PC-3 (cell line): ENCODE measurements at regions of chrX and their contacts with region 1.

Region 1: GRCh38 chrX:43750248-43750676 is 94.2 kb downstream of the MAOA start:
- DNase-seq: peak; percentile 71
- ATAC-seq: peak; percentile 74
- H3K4me3 ChIP-seq: no peak overlapping the region
- H3K27ac ChIP-seq: no peak overlapping the region
- H3K4me1 ChIP-seq: no peaks in the 10 kb centered on the region
- H3K27me3 ChIP-seq: no peaks in the 10 kb centered on the region
- CTCF ChIP-seq: peak; percentile 75

Region 2: GRCh38 chrX:43349363-43349762 is 400.9 kb before region 1 on chrX:
- CTCF ChIA-PET with region 1: no interaction called
- POLR2A ChIA-PET with region 1: no interaction called
- intact Hi-C with region 1: loop called (anchors 10 kb)
- DNase-seq: peak; percentile 55
- ATAC-seq: no peak
- H3K4me3 ChIP-seq: no peak overlapping the region
- H3K27ac ChIP-seq: no peak overlapping the region
- H3K4me1 ChIP-seq: no peaks in the 10 kb centered on the region
- H3K27me3 ChIP-seq: no peaks in the 10 kb centered on the region
- CTCF ChIP-seq: peak; percentile 70

Region 3: DNA sequence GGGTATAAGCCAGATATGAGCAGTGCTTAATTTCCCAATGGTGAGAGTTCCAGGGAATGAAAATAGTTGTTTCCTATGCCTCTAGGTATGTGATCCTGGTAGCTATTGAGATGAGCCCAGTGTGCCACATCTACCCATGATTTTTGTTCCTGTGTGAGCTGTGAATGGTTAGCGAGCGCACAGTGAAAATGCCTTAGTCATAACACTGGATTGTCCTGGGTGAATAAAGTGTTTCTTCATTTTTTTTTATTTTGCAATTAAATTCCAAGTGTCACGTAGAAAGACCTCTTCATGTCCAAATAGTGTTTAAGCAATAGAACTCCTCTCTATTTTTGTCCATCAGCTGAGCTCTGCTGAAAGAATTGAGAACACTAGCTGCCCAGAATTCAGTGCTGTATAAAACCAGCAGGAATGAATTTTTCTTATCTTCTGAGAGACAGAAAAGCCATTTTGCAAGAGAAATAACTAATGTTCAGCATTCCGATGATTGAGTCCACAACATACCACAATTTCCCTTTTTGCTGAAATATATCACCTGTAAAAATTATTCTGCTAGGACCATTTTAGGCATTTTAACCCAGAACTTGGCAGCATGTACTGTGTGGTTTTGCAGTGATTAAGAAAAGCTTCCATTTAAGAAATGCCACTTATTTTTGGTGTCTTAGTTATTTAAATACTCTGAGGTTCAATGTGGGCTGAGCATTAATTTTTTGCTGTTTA is 88.6 kb before region 1 on chrX:
- CTCF ChIA-PET with region 1: no interaction called
- POLR2A ChIA-PET with region 1: no interaction called
- intact Hi-C with region 1: no loop called
- DNase-seq: no peak
- ATAC-seq: no peak
- H3K4me3 ChIP-seq: no peak overlapping the region
- H3K27ac ChIP-seq: no peak overlapping the region
- H3K4me1 ChIP-seq: no peaks in the 10 kb centered on the region
- H3K27me3 ChIP-seq: no peaks in the 10 kb centered on the region
- CTCF ChIP-seq: no peak

Region 4: DNA sequence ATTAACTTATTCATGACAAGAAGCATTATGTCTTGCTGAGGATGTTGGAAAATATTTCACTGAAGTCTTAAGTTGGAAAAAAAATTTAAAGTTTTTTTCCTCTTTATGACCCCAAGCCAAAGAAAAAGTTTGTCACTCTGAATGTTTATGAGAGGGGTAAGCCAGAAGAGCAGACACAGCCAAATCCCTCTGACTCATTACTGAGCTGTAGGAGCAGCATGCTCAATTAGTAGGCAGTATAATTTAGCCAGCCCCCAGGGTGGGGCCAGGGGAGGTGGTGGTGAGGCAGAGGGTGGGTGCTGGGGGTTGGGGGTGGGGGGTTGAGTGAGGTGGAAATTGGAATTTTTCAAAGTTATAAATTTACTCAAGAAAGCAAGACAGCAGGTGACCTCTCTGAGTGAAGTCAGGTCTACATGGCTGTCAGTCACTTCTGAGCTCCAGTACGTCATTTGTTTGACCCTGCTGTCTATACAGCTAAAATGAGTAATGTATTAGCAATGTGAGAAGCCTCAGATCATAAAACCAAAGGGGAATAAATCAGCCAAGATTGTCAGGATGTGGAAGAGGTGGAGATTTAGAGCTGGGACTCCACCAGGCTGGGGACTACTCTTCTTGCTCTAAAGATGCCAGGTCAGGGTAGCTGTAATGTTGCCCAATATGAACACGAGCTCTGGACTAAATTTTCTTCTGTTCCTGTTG is 321.7 kb after region 1 on chrX:
- CTCF ChIA-PET with region 1: interaction called, 15 read pairs
- POLR2A ChIA-PET with region 1: no interaction called
- intact Hi-C with region 1: no loop called
- DNase-seq: peak; percentile 92
- ATAC-seq: peak; percentile 93
- H3K4me3 ChIP-seq: peak overlapping the region; percentile 15; the same call in 1 of the 2 replicates
- H3K27ac ChIP-seq: peak overlapping the region; percentile 79
- H3K4me1 ChIP-seq: peaks cover 20% of the 10 kb centered on the region
- H3K27me3 ChIP-seq: no peaks in the 10 kb centered on the region
- CTCF ChIP-seq: no peak